AG04450 (cell line): ENCODE measurements at regions of chr4 and their contacts with region 1.

Region 1: GRCh38 chr4:48403358-48403757 is 62.0 kb downstream of the SLAIN2 start:
- DNase-seq: no peak
- H3K4me3 ChIP-seq: no peak overlapping the region
- H3K27ac ChIP-seq: no peak overlapping the region
- H3K27me3 ChIP-seq: no peaks in the 10 kb centered on the region
- CTCF ChIP-seq: no peak

Region 2: DNA sequence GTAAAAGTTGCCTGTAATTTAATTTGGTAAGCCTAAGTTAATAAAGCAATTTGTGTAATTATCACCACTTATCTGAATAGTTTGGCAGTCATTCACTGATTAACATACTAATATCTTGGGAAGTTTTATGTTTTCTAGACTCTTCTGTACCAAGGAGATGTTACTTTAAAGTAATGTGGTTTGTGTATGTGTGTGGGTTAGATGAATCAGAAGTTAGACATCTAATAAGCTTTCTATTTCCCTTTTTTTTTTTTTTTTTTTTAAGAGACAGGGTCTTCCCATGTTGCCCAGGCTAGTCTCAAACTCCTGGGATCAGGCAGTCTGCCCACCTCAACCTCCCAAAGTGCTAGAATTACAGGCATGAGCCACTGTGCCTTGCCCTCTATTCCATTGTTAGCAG is 56.8 kb before region 1 on chr4:
- CTCF ChIA-PET with region 1: interaction called, 5 read pairs
- POLR2A ChIA-PET with region 1: interaction called, 11 read pairs
- DNase-seq: no peak
- H3K4me3 ChIP-seq: no peak overlapping the region
- H3K27ac ChIP-seq: no peak overlapping the region
- H3K27me3 ChIP-seq: no peaks in the 10 kb centered on the region
- CTCF ChIP-seq: no peak